ENCODE measurements at regions of chr9 and their contacts with region 1.

Region 1: GRCh38 chr9:97890038-97890437 is 32.3 kb downstream of the TRMO start:
- DNase-seq: no peak
- ATAC-seq: 0 out of 2 replicates have a peak, but pooled peaks have one; percentile 44
- H3K4me3 ChIP-seq: no peak overlapping the region
- H3K27ac ChIP-seq: no peak overlapping the region
- H3K4me1 ChIP-seq: no peaks in the 10 kb centered on the region
- H3K27me3 ChIP-seq: peaks cover 3% of the 10 kb centered on the region; the same call in 1 of the 2 replicates
- CTCF ChIP-seq: peak; percentile 52
- POLR2A ChIP-seq: no peak
- RAD21 ChIP-seq: peak; percentile 25; the same call in 1 of the 2 replicates

Region 2: DNA sequence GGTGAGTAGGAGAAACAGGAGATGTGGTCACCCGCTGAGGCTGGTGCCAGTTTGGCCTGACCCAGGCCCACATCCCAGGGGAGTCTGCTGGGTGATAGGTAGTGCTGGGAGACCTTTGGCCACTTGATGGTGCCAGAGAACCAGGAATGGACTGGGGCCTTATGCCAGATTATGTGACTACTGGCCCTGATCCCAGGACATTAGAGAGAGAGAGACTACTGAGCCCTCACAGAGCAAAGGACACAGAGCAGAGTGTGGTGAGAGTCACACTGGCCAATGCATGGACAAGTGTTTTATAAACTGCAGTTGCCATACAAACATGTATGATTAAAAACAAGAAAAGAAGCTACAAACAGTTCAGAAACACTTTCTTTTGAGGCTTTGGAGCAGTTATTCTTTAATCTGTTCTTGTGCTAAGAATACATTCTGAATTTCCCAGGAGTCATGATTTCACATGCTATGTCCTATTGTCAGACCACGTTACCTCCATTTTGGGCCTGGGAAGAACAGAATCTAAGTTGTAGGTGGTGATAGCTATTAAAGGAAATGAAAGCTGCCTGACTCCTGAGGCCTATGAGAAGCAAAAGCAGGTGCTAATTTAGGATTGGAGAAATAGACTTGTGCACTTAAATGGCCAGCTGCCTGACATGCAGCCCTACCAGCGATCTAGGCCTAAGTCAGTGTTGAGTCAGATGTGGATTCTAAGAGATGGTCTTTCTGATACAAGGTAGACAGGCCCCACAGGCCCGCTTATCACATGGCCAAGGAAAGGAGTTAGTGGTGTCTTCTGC is 421.2 kb before region 1 on chr9:
- CTCF ChIA-PET with region 1: no interaction called
- POLR2A ChIA-PET with region 1: no interaction called
- dilution Hi-C with region 1: no loop called
- in situ Hi-C with region 1: no loop called
- intact Hi-C with region 1: loop called (anchors 10 kb)
- DNase-seq: peak; percentile 65
- ATAC-seq: peak; percentile 97
- H3K4me3 ChIP-seq: no peak overlapping the region
- H3K27ac ChIP-seq: no peak overlapping the region
- H3K4me1 ChIP-seq: peaks cover 2% of the 10 kb centered on the region
- H3K27me3 ChIP-seq: no peaks in the 10 kb centered on the region
- CTCF ChIP-seq: peak; percentile 95
- POLR2A ChIP-seq: peak; percentile 55; the same call in 1 of the 2 replicates
- RAD21 ChIP-seq: peak; percentile 98

Region 3: GRCh38 chr9:97744710-97745701 is 145.0 kb before region 1 on chr9:
- CTCF ChIA-PET with region 1: no interaction called
- POLR2A ChIA-PET with region 1: no interaction called
- dilution Hi-C with region 1: no loop called
- in situ Hi-C with region 1: no loop called
- intact Hi-C with region 1: no loop called
- DNase-seq: peak; percentile 30
- ATAC-seq: no peak
- H3K4me3 ChIP-seq: no peak overlapping the region
- H3K27ac ChIP-seq: no peak overlapping the region
- H3K4me1 ChIP-seq: no peaks in the 10 kb centered on the region
- H3K27me3 ChIP-seq: peaks cover 54% of the 10 kb centered on the region
- CTCF ChIP-seq: no peak
- POLR2A ChIP-seq: no peak
- RAD21 ChIP-seq: no peak

Region 4: DNA sequence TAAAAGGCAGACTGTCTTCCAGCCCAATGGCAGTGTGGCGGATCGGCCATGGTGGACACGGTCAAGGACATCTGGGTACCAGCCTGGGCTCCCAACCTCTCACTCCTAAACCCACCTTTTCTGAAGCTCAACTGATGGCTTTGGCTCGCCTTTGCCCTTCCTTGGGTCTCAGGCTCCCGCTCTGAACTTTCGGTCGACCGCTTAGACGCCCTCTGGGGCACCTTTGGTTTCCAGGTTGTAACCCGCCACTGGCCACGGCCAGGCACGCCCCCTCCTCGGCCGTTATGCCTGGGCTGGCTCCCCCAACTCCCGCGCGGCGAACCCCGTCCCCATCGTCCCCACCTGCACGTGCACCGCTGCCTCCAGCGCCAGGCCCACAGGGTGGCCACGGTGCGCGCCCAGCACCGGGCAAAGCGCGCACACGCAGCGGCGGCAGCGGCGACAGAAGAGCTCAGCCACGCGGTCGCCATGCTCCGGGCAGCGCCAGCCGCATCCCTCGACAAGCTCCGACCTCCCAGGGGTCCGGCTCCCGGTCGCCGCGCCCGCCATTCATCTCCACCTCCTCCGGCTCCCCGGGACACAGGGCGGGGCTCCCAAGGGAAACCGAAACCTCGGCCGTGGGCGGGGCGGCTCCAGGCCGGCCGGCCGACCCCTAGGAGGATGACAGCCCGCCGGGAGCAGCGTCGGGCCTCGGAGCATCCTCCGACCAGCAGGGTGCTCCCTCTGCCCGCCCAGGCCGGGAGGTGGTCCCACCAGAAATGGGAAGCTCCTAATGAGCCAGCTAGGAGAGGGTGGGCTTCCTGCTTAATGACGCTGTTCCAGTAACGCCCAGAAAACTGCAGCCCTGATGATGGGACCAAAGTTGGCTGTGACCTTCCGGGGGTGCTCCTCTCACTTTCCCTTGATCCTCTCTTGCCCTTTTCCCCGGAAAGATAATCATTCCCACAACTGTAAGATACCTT is 228.9 kb after region 1 on chr9 and contains the start of gene TRIM14:
- CTCF ChIA-PET with region 1: no interaction called
- POLR2A ChIA-PET with region 1: no interaction called
- dilution Hi-C with region 1: no loop called
- in situ Hi-C with region 1: no loop called
- intact Hi-C with region 1: no loop called
- DNase-seq: peak; percentile 55
- ATAC-seq: peak; percentile 98
- H3K4me3 ChIP-seq: peak within 1 kb of the TSS; percentile 70
- H3K27ac ChIP-seq: peak within 1 kb of the TSS; percentile 10
- H3K4me1 ChIP-seq: no peaks in the 10 kb centered on the region
- H3K27me3 ChIP-seq: no peaks in the 10 kb centered on the region
- CTCF ChIP-seq: peak; percentile 46
- POLR2A ChIP-seq: no peak
- RAD21 ChIP-seq: peak; percentile 39
- total RNA-seq, gene TRIM14: 3.0 and 3.1 TPM in 2 replicates

Measured in IMR-90 (cell line).